ENCODE measurements at regions of chr11 and their contacts with region 1.

Region 1: DNA sequence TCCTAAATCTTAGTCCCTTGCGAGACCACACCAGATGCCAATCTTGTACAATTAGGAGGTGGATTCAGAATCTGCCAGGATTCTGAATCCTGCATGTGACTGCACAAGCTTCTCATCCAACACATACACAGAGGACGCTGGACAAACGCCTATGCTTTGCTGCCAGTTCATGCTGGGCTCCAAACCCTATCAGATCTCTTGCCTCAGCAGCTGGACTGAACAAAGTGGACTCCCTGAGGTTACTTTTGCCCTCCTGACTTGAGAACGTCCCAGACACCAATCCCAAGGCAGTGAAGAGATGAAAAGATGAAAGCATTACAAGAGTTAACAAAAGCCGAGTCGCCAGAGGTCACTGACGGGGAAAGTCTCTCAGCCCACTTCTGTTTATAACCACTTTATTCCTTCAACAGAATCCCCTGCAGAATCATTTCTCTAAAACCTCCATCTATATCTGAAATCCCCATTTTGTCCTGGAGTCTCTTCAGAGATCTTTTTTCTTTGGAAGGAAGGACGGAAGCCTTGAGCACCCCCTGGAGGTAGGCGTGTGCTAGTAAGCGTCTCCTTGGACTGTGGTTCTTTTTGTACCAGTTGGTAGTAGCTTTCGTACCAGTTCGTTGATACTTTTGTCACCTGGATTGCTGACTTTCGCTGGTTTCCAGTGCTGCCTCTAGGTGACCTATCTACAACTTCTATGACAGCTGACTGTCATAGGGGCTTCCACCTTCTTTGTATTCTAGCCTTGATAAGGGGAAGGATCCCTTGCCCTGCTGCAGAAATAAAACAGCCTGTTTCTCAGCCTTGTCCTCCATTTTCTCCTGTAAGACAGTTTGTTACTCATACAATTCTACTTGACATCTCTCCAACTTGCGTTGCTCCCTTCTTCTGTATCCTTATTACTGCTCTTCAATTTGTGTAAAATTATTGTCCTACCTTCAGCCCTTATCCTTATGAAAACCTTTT is 26.1 kb upstream of the EED start:
- DNase-seq: peak; percentile 84

Region 2: GRCh38 chr11:85854557-85855340 is 363.7 kb before region 1 on chr11:
- intact Hi-C with region 1: loop called in 1 of 2 experiments (anchors 10 kb)
- DNase-seq: peak; percentile 98

Region 3: GRCh38 chr11:85941380-85941973 is 276.9 kb before region 1 on chr11:
- intact Hi-C with region 1: loop called in 1 of 2 experiments (anchors 10 kb)
- DNase-seq: no peak

Region 4: DNA sequence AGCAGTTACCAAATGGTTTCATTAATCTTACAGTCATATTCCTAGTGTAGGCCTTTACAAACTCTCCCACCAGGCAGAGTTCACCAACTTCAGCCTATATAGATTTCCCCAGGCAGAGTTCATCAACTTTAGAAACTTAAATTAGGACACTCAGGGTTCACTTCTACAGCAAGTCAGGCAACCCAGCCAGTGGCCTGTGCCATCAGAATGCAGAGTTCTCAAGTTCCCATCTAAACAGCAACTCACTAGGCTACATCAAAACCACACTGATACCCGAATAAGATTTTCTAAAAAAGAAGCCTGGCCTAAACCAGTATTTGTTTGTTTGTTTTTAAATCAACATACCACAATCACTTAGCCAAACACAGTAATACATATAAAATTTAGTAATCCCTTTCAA is 183.2 kb before region 1 on chr11:
- intact Hi-C with region 1: loop called in 1 of 2 experiments (anchors 10 kb)
- DNase-seq: no peak

Region 5: DNA sequence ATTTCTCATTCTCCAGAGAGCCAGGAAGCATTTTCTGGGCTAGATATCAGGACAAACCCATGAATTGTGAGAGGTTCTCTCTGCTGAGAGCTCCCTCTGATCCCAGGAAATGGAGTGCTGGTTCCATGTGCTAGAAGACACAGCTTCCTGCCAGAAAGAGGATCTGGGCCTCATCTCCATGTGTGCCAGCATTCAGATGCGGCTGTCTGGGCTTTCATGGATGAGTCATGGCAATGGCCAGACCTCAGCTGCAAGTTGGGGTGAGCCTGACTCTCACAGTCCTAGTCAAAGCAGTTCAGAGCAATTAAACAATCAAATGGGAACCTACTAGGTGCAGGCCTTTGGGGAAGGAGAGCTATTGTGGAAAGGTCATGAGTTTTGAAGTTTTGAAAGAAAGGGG is 56.2 kb before region 1 on chr11:
- intact Hi-C with region 1: no loop called
- DNase-seq: peak; percentile 84

Measured in posterior vena cava (tissue), 2 donors.